ENCODE measurements at regions of chr4 and their contacts with region 1.

Region 1: DNA sequence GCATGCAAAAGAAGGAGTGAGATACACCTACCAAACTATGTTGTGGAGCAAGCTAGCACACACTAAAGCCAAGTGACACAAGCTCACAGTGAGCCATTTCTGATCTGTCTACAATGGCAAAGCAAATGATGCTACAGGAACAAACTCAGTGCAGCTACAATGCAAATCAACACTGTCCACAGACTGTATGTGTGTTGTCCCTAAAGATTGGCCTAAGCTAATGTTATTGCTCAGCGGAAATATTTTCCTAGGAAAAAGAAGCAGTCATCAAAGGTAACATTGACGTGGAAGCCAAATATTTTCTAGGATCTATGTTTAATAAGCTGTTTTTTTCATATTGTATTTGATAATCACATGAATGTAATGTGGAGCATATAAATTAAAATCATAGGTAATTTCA is 34.7 kb upstream of the HPGDS start:
- DNase-seq: no peak
- ATAC-seq: no peak
- H3K4me3 ChIP-seq: no peak overlapping the region
- H3K4me3 Mint-ChIP-seq: no peak overlapping the region
- H3K27ac ChIP-seq: no peak overlapping the region
- H3K27ac Mint-ChIP-seq: no peak overlapping the region
- H3K4me1 ChIP-seq: no peaks in the 10 kb centered on the region
- H3K4me1 Mint-ChIP-seq: no peaks in the 10 kb centered on the region
- H3K27me3 ChIP-seq: no peaks in the 10 kb centered on the region
- H3K27me3 Mint-ChIP-seq: peaks cover 0 to 6% of the 10 kb centered on the region in 2 donors

Region 2: GRCh38 chr4:94390804-94391410 is 13.6 kb after region 1 on chr4:
- CTCF ChIA-PET with region 1: no interaction called
- POLR2A ChIA-PET with region 1: no interaction called
- DNase-seq: peak in 5 of 35 experiments; percentile 0 to 24 (median 10)
- ATAC-seq: no peak
- H3K4me3 ChIP-seq: no peak overlapping the region
- H3K4me3 Mint-ChIP-seq: no peak overlapping the region
- H3K27ac ChIP-seq: no peak overlapping the region
- H3K27ac Mint-ChIP-seq: no peak overlapping the region
- H3K4me1 ChIP-seq: no peaks in the 10 kb centered on the region
- H3K4me1 Mint-ChIP-seq: no peaks in the 10 kb centered on the region
- H3K27me3 ChIP-seq: no peaks in the 10 kb centered on the region
- H3K27me3 Mint-ChIP-seq: peaks cover 15 to 17% of the 10 kb centered on the region in 2 donors

Region 3: DNA sequence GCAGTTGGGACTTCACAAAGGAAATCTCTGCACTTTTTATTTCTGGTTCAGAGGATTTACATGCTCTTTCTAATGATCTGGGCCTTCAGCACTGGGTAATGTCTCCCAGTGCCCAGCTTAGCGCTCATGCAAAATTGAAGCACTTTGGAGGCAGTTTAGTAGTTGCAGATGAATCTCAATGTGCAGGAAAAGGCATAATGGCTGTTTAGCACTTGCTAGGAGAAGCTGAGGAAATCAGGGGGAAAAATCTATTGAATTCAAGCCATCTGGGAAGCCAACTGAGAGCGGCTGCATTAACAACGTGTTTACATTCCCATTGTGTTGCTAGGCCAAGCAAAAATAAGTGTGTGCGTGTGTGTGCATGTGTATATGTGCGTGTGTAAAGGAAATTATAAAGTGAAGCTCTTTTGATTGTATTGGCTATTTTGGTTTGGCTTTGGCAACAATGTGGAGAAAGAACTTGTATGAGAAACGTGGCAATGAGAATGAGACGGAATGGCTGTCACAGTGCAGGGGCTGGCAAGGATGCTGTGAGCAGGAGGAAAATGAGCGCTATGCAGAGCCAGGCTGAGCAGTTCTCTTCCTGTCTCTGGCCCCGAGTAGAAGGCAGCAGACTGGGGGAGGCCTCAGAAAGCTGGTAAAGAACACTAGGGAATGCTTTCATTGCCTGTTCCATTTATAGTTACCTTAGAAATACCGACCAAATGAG is 939.9 kb after region 1 on chr4:
- CTCF ChIA-PET with region 1: no interaction called
- POLR2A ChIA-PET with region 1: interaction called in 1 of 2 experiments, 16 read pairs
- DNase-seq: no peak
- ATAC-seq: no peak
- H3K4me3 ChIP-seq: no peak overlapping the region
- H3K4me3 Mint-ChIP-seq: no peak overlapping the region
- H3K27ac ChIP-seq: no peak overlapping the region
- H3K27ac Mint-ChIP-seq: no peak overlapping the region
- H3K4me1 ChIP-seq: no peaks in the 10 kb centered on the region
- H3K4me1 Mint-ChIP-seq: no peaks in the 10 kb centered on the region
- H3K27me3 ChIP-seq: no peaks in the 10 kb centered on the region
- H3K27me3 Mint-ChIP-seq: peaks cover 0 to 6% of the 10 kb centered on the region in 2 donors